ENCODE measurements at regions of chr1 and their contacts with region 1.

Region 1: DNA sequence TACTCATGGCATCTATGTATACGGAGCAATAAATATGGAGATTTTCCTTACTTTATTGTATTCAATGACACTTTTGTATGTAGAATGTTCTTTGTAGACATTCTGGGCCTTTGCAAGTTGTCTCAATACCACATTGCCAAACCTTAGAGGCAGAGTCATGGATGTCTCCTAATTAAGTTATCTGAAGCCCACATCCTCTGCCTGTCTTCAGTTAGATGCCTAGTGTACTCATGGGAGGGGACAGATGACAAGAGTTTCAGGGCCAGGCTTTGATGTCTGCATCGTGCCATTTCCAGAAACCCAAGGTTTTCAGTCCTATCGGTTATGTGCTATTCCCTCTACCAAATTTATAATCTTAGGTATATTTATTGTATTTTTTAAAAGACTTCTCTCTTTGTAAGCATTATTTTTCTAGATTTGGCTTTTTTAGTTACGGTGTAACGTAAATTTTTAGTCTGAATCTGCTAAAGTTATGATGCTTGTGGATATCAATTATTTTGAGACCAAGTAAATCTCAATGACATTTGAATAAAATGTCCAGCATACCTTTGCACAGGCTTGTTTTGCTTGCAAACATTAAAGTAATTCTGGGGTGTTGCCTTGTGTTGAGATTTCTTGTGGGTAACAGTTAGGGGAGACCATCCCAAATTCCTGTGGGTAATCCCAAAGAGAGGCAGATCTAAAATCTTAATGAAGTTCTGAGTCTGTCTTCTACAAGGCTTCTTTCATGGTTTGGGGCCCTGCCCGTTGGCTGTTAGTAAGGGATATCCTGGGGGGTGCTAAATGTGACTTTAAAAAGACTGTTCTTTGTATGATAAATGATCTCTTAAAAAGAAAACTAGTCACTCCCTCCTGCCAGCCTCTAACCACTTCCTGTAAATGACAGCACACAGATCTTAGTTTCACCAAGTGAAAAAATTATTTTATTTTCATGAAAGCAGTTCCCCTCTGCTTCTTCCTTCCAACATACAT is 8.0 kb upstream of the MACF1 start:
- DNase-seq: no peak
- H3K4me3 ChIP-seq: no peak overlapping the region
- H3K4me3 Mint-ChIP-seq: no peak overlapping the region
- H3K27ac Mint-ChIP-seq: no peak overlapping the region
- H3K4me1 ChIP-seq: peaks cover 6% of the 10 kb centered on the region; the same call in 1 of the 2 replicates
- H3K4me1 Mint-ChIP-seq: peaks cover 23% of the 10 kb centered on the region
- H3K27me3 ChIP-seq: no peaks in the 10 kb centered on the region
- H3K27me3 Mint-ChIP-seq: no peaks in the 10 kb centered on the region
- CTCF ChIP-seq: no peak

Region 2: DNA sequence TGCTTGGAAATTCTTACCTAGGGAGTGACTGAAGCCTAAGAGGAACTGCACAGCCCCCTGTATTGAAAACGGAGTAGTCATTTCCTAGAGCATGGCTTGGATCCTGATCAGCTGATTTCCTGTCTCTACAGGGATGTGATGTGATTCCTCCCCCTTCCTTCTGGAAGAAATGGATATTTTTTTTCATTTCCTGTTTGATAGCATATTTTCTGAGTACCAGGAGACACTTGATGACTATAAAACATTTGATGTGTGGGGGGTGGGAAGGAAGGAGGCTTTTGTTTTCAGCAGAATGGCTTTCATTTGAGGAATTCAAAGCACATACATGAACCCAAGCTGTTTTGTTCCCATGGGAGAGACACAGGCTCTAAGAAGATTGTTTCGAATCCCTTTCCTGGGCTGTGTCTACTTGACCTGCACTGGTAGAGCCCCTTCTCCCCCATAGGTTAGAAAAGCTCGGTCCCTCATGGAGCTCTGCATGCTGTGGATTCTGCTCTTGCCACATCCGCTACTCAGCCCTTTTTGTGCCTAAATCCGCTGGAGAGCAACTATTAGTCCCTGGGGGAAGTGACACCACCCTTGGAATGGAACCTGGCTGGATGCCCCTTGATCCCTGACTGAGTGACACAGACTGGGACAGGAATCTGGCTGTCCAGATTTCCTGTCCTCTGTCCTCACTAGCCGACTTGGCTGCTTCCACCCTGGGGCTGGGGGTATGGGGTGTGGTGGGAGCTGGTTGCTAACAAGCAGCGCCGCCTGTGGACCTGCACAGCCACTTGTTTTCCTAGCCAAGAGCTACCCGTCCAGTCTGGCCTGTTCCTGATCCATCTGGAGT is 63.8 kb before region 1 on chr1:
- CTCF ChIA-PET with region 1: interaction called, 27 read pairs
- POLR2A ChIA-PET with region 1: no interaction called
- intact Hi-C with region 1: loop called (anchors 1 kb)
- DNase-seq: peak; percentile 88 to 93
- H3K4me3 ChIP-seq: no peak overlapping the region
- H3K4me3 Mint-ChIP-seq: peak overlapping the region; percentile 50
- H3K27ac Mint-ChIP-seq: peak overlapping the region; percentile 77
- H3K4me1 ChIP-seq: peaks cover 22% of the 10 kb centered on the region
- H3K4me1 Mint-ChIP-seq: peaks cover 18% of the 10 kb centered on the region
- H3K27me3 ChIP-seq: no peaks in the 10 kb centered on the region
- H3K27me3 Mint-ChIP-seq: no peaks in the 10 kb centered on the region
- CTCF ChIP-seq: peak in 1 of 2 experiments; percentile 52

Region 3: DNA sequence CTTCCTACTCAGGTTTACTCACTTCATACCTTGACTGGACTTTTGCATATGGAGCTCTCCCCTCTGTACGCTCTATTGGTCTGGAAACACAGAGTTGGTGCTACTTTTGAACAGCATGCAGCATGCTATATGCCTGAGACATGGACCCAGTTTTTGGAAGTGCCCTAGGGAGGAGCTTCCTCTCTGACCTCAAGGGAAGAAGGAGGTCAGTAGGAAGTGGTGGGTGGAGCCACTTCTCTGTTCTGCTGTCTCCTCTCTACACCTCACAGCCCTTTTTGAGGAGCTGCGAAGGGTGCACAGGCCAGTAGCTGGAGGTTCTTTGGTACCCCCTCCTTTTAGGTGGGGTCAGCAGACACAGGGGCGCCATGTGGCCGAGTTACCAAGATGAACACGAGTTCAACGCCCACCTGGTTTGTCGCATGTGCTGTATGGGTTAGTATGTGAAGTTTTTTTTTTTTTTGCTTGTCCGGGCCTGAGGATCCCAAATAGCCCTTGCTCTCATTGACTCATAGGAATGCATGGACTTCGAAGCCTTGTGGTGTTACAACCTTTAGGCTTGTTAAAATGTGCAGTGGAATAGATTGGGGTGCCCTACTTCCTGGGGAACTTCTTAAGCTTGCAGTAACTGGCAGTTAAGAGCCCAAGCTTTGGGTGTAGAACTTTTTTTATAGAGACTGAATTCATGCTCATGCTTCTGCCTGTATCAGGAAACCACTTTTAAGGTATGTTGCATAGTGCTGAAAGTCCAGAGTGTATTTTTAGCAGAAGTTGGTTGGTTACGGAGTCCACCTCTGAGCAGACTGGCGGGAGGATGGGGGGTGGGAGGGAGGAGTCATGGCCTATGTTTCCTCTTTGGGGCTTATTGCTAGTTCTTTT is 18.7 kb after region 1 on chr1:
- CTCF ChIA-PET with region 1: interaction called, 38 read pairs
- POLR2A ChIA-PET with region 1: interaction called, 3 read pairs
- intact Hi-C with region 1: no loop called
- DNase-seq: peak in 1 of 2 experiments; percentile 41
- H3K4me3 ChIP-seq: peak overlapping the region; percentile 19
- H3K4me3 Mint-ChIP-seq: peak overlapping the region; percentile 61
- H3K27ac Mint-ChIP-seq: peak overlapping the region; percentile 83
- H3K4me1 ChIP-seq: peaks cover 58% of the 10 kb centered on the region
- H3K4me1 Mint-ChIP-seq: peaks cover 23% of the 10 kb centered on the region
- H3K27me3 ChIP-seq: no peaks in the 10 kb centered on the region
- H3K27me3 Mint-ChIP-seq: no peaks in the 10 kb centered on the region
- CTCF ChIP-seq: no peak

Region 4: DNA sequence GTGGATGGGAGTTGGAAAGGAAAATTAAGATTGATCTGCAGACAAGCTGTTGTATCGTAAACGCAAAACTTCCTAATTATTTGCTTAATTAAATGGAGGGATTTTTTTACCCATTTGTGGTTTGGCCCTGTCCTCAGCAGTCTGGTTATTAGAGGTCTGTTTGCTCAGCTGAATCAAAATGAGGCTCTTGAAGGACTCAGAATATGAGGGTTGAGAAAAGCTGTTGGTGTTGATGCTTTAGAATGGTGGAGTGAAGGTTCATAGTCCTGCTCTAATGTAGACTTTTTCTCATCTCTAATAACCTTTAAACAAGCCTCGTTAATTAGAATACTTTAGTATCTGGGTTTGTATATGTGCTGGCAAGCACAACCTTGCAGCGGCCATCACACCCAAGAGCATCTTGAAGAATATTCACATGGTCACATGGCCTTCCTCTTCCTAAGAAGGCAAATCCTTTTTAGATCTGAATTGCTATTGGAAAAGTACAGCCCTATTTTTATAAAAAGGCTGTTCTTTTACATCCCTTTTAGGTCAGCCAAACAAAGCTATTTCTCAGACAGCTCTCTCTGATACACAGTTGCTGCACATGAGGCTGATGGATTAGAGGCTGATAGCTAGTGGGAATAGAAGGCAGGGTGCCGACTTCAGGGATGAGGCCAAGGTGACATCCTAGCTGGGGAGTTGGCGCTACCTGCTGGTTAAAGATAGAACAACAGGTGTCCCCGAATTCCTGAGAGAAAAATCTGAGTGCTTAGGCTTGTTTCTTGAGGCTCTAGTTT is 61.8 kb after region 1 on chr1:
- CTCF ChIA-PET with region 1: interaction called, 103 read pairs
- POLR2A ChIA-PET with region 1: no interaction called
- intact Hi-C with region 1: loop called (anchors 1 kb)
- DNase-seq: peak; percentile 55 to 70
- H3K4me3 ChIP-seq: no peak overlapping the region
- H3K4me3 Mint-ChIP-seq: no peak overlapping the region
- H3K27ac Mint-ChIP-seq: no peak overlapping the region
- H3K4me1 ChIP-seq: no peaks in the 10 kb centered on the region
- H3K4me1 Mint-ChIP-seq: no peaks in the 10 kb centered on the region
- H3K27me3 ChIP-seq: no peaks in the 10 kb centered on the region
- H3K27me3 Mint-ChIP-seq: no peaks in the 10 kb centered on the region
- CTCF ChIP-seq: peak; percentile 62 to 75

Region 5: GRCh38 chr1:39370602-39371001 is 174.1 kb after region 1 on chr1:
- CTCF ChIA-PET with region 1: no interaction called
- POLR2A ChIA-PET with region 1: no interaction called
- intact Hi-C with region 1: no loop called
- DNase-seq: no peak
- H3K4me3 ChIP-seq: no peak overlapping the region
- H3K4me3 Mint-ChIP-seq: no peak overlapping the region
- H3K27ac Mint-ChIP-seq: no peak overlapping the region
- H3K4me1 ChIP-seq: peaks cover 13% of the 10 kb centered on the region
- H3K4me1 Mint-ChIP-seq: no peaks in the 10 kb centered on the region
- H3K27me3 ChIP-seq: no peaks in the 10 kb centered on the region
- H3K27me3 Mint-ChIP-seq: no peaks in the 10 kb centered on the region
- CTCF ChIP-seq: no peak

Measured in Caco-2 (cell line).